ENCODE measurements at regions of chr12 and their contacts with region 1.

Region 1: DNA sequence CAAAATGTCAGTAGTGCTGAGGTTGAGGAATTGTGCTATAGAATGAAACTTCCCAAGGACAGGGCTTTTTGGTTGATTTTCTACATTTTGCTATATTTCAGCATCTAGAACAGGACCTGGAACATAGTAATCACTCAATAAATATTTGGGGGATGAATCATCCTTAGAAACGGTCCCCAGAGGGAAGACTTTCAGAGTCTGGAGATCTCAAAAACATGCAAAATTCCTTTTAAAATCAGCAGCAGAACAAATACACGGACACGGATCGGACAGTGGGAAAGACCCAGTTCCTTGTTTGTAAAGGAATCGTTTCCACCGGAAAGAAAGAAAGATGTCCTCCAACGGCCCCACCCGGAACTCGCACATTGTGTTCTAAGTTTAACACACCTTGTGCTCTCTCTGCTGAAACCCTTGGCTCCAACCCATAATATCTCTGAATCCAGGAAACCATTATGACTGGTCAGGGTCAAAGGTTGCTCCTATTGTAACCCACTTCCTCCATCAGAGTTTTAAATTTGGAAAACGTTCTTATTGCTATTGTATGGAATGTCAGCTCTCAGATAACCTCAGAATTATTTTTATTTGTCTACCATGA is 617.2 kb downstream of the MED13L start:
- DNase-seq: no peak
- ATAC-seq: peak; percentile 36
- H3K4me3 ChIP-seq: no peak overlapping the region
- H3K27ac ChIP-seq: peak overlapping the region; percentile 87 to 89
- H3K4me1 ChIP-seq: peaks cover 2 to 12% of the 10 kb centered on the region in 2 donors
- H3K27me3 ChIP-seq: no peaks in the 10 kb centered on the region

Region 2: GRCh38 chr12:115362339-115362976 is 297.9 kb before region 1 on chr12:
- intact Hi-C with region 1: no loop called
- DNase-seq: no peak
- ATAC-seq: no peak
- H3K4me3 ChIP-seq: no peak overlapping the region
- H3K27ac ChIP-seq: no peak overlapping the region
- H3K4me1 ChIP-seq: no peaks in the 10 kb centered on the region
- H3K27me3 ChIP-seq: no peaks in the 10 kb centered on the region

Region 3: GRCh38 chr12:115451780-115452736 is 208.2 kb before region 1 on chr12:
- intact Hi-C with region 1: loop called in 1 of 2 experiments (anchors 5 kb)
- DNase-seq: no peak
- ATAC-seq: no peak
- H3K4me3 ChIP-seq: peak overlapping the region in 1 of 2 donors; percentile 32
- H3K27ac ChIP-seq: no peak overlapping the region
- H3K4me1 ChIP-seq: no peaks in the 10 kb centered on the region
- H3K27me3 ChIP-seq: no peaks in the 10 kb centered on the region

Region 4: DNA sequence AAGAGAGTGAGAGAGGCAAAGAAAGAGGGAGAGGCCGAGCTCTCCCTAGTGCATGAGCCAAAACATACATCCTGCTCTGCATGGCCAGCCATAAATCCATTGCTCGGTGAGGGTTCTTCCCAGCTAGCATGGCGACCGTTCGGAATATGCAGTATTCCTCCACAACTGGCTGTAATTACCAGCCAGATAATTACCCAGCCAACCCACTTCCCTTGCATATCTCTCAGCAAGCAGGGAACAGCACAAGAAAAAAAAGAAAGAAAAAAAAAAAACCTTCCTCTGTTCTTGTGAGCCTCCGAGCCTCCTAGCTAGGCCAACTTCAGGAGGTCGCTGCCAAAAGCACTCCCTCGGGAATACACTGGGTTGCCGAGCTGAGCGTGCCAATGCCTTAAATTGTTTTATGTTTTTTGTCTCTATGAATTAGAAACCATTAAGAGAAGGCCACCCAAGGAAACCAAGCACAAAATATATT is 49.3 kb after region 1 on chr12:
- intact Hi-C with region 1: loop called in 1 of 2 experiments (anchors 5 kb)
- DNase-seq: peak; percentile 88 to 89
- ATAC-seq: peak; percentile 90
- H3K4me3 ChIP-seq: no peak overlapping the region
- H3K27ac ChIP-seq: no peak overlapping the region
- H3K4me1 ChIP-seq: peaks cover 2 to 6% of the 10 kb centered on the region in 2 donors
- H3K27me3 ChIP-seq: no peaks in the 10 kb centered on the region

Measured in aorta (tissue), 5 donors.